Heart right ventricle (tissue), 16 donors: ENCODE measurements at regions of chr4 and their contacts with region 1.

Region 1: GRCh38 chr4:152032722-152033131 is 271.9 kb upstream of the GATB start:
- DNase-seq: no peak
- ATAC-seq: peak in 6 of 8 donors; percentile 48 to 91 (median 54)
- H3K4me3 ChIP-seq: no peak overlapping the region
- H3K27ac ChIP-seq: peak overlapping the region in 9 of 10 donors; percentile 34 to 74 (median 55)
- H3K4me1 ChIP-seq: peaks cover 0 to 18% (median 4%) of the 10 kb centered on the region in 9 donors
- H3K27me3 ChIP-seq: no peaks in the 10 kb centered on the region
- CTCF ChIP-seq: no peak

Region 2: GRCh38 chr4:151957153-151957552 is 75.6 kb before region 1 on chr4:
- intact Hi-C with region 1: loop called in 1 of 10 experiments (anchors 5 kb)
- DNase-seq: peak; percentile 16 to 19
- ATAC-seq: peak in 6 of 8 donors; percentile 11 to 69 (median 50)
- H3K4me3 ChIP-seq: no peak overlapping the region
- H3K27ac ChIP-seq: peak overlapping the region in 6 of 10 donors; percentile 52 to 79 (median 62)
- H3K4me1 ChIP-seq: peaks cover 0 to 38% (median 10%) of the 10 kb centered on the region in 9 donors
- H3K27me3 ChIP-seq: no peaks in the 10 kb centered on the region
- CTCF ChIP-seq: peak in 3 of 9 donors; percentile 12 to 24 (median 16)

Region 3: DNA sequence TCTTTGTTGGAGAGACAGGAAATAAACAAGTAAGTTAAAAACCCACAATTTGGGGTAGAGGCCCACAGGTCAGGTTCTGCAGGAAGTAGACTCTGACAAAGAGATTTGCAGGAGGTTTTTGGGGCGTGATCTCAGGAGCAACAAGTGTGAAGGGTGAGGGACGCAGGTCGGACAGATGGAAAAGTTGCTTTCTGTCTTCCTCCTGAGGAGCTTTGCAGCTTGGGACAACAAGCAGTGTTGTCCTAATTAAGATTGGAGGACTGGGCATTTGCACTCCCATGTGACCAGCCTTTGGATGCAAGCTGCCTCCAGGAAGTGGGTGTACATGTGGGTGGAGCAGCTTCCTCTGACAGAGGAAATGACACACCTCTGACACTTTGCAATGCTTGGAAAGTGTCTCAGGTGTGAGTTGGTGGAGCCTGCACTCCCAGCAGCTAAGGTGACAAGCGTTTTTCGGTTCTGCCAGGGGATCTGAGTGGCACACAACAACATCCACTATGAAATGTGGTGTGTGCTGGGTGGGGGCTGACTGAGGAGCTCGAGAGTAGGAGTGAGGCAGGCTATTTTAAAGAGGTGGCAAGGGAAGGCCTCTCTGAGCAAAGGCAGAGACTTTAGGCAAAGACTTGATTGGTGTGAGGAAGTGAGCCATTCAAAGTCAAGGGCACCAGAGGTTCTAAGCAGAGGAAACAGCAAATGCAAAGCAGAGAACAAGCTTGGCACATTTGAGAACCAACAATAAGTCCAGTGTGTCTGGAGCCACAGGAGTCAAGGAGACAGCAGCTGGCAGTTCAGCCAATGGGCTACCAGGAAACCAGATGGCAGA is 67.9 kb after region 1 on chr4:
- intact Hi-C with region 1: no loop called
- DNase-seq: no peak
- ATAC-seq: peak in 7 of 8 donors; percentile 34 to 73 (median 45)
- H3K4me3 ChIP-seq: peak overlapping the region in 1 of 10 donors; percentile 7
- H3K27ac ChIP-seq: peak overlapping the region in 6 of 10 donors; percentile 27 to 86 (median 35)
- H3K4me1 ChIP-seq: peaks cover 0 to 48% (median 20%) of the 10 kb centered on the region in 9 donors
- H3K27me3 ChIP-seq: no peaks in the 10 kb centered on the region
- CTCF ChIP-seq: no peak